AG04450 (cell line): ENCODE measurements at regions of chr11 and their contacts with region 1.

Region 1: DNA sequence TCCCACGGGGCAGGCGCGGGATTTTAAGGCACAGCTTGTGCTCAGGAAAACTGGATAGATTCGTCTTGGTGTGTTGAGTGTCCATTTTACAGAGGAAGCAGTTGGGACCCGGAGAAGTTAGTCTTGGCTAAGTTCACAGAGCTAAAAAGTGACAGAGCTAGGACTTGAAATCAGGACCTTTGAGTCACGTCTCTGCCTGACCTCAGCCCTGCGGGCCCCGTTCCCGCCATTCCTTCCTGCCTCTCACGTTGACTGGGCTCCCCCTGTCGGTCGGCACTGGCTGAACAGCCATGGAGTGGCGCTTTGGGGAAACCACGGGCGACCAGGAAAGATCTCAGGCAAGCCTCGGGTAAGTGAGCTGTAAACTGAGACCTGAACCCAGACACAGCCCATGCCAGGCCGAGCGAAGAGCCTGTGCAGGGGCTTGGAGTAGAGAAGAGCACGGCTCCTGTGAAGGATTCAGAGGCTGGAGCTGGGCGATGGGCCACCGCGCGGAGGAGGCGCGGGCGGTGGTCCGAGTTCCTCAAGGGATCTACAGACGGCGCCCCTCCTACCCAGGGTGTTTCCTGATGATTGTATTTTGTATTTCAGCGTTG is 54.1 kb downstream of the WNT11 start:
- DNase-seq: peak; percentile 13
- H3K4me3 ChIP-seq: peak overlapping the region; percentile 43
- H3K27ac ChIP-seq: no peak overlapping the region
- H3K27me3 ChIP-seq: peaks cover 8% of the 10 kb centered on the region
- CTCF ChIP-seq: peak; percentile 93

Region 2: DNA sequence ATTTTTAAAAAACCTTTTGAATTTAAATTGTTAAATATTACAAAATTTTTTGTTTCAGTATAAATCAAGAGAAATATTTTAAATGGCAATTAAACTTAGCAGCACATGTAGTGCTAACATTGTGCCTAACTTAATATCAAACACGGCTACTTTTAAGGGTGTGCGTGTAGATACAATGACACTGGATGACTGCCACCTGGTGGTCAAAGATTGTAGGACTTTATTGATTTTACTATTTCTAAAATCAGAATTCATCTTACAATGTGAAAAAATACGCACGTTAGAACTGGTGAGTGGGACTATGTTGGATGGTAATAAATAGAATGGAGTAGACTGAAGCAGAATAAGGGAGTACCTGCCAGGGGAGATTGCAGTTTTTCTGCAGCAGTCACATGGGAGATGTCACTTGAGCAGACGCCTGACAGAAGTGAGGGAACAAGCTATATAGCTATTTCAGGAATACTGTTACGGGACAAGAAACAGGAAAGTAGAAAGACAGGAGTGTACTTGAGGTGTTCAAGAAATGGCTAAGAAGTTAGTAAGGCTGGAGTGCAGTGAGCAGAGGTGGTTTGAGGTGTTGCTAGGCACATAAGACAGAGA is 284.3 kb before region 1 on chr11:
- CTCF ChIA-PET with region 1: interaction called, 12 read pairs
- POLR2A ChIA-PET with region 1: no interaction called
- DNase-seq: peak; percentile 23
- H3K4me3 ChIP-seq: no peak overlapping the region
- H3K27ac ChIP-seq: no peak overlapping the region
- H3K27me3 ChIP-seq: no peaks in the 10 kb centered on the region
- CTCF ChIP-seq: peak; percentile 63

Region 3: GRCh38 chr11:76077575-76078150 is 74.5 kb before region 1 on chr11:
- CTCF ChIA-PET with region 1: interaction called, 12 read pairs
- POLR2A ChIA-PET with region 1: no interaction called
- DNase-seq: no peak
- H3K4me3 ChIP-seq: no peak overlapping the region
- H3K27ac ChIP-seq: no peak overlapping the region
- H3K27me3 ChIP-seq: no peaks in the 10 kb centered on the region
- CTCF ChIP-seq: no peak

Region 4: GRCh38 chr11:76107971-76108370 is 44.2 kb before region 1 on chr11:
- CTCF ChIA-PET with region 1: interaction called, 14 read pairs
- POLR2A ChIA-PET with region 1: no interaction called
- DNase-seq: no peak
- H3K4me3 ChIP-seq: no peak overlapping the region
- H3K27ac ChIP-seq: no peak overlapping the region
- H3K27me3 ChIP-seq: no peaks in the 10 kb centered on the region
- CTCF ChIP-seq: no peak

Region 5: DNA sequence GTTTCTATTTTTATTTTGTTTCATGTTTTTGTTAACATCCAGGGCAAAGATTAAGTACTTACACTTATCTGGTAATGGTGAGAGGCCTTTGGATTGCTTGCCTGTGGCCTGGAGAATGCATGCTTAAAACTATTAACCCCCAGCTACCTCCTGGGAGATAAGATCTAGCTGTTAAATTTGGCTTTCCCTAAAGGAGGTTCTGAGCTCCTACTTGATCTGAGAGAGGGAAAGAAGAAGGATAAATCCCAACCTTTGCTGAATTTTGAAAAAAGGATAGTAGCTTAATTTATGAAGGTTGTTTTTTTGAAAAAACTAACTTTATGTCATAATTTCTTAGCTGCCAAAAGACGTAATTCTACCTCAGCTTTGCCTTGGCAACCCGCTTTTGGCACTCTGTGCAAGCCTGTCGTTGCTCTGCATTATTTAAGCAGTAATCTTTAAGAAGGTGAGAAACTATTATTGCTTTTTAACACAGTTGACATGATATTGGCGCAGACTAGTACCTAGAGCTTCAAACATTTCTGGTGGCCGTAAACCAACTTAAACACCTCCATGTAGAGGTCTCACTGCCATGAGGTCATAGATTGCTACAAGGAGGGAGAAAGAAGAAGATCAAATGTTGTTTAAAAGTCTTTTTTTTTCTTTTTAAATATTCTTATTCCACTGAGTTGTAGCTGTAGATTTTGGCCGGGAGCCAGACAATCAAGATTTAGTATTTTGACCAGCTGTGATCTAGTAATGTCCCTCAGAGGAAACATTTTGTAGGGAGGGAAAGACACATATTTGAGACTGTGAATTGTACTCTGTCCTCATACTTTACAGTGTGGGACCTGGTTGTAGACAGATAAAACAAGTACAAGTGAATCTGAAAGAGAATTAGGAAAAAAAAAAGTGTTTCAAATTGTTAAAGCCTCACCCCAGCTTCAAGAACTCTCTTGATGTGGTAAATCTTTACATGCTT is 20.2 kb before region 1 on chr11:
- CTCF ChIA-PET with region 1: interaction called, 23 read pairs
- POLR2A ChIA-PET with region 1: no interaction called
- DNase-seq: no peak
- H3K4me3 ChIP-seq: no peak overlapping the region
- H3K27ac ChIP-seq: no peak overlapping the region
- H3K27me3 ChIP-seq: no peaks in the 10 kb centered on the region
- CTCF ChIP-seq: no peak

Region 6: DNA sequence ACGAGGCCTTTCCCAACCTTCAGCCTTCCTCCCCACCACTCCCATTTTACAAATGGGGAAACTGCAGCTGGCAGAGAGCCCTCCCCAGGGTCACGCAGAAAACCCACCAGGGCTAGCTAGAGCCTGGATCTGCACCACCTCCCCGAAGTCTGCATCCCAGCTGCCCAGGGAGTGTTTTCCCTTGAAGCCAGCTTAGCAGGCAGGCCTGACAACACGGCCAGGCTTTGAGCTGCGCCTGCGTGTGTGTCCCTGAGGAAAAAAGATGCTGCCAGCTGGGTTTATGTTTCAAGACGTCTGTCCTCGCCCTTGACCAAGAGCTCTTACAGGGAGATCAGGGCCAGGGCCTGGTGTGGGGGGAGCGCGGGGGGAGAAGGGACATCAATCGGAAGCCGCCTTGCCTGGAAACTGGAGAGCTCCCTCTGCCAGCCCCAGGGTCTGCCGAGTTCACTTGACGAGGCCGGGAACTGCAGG is 33.8 kb after region 1 on chr11:
- CTCF ChIA-PET with region 1: interaction called, 12 read pairs
- POLR2A ChIA-PET with region 1: no interaction called
- DNase-seq: no peak
- H3K4me3 ChIP-seq: no peak overlapping the region
- H3K27ac ChIP-seq: no peak overlapping the region
- H3K27me3 ChIP-seq: peaks cover 17% of the 10 kb centered on the region
- CTCF ChIP-seq: no peak

Region 7: GRCh38 chr11:76501526-76502210 is 349.5 kb after region 1 on chr11:
- CTCF ChIA-PET with region 1: no interaction called
- POLR2A ChIA-PET with region 1: no interaction called
- DNase-seq: no peak
- H3K4me3 ChIP-seq: no peak overlapping the region
- H3K27ac ChIP-seq: no peak overlapping the region
- H3K27me3 ChIP-seq: no peaks in the 10 kb centered on the region
- CTCF ChIP-seq: no peak